Activated CD8-positive, alpha-beta T cell treated with anti-CD3 and anti-CD28 coated beads for 36 hours (primary cell): ENCODE measurements at regions of chr13 and their contacts with region 1.

Region 1: GRCh38 chr13:79405829-79406596 is at the start of gene RBM26:
- DNase-seq: peak; percentile 96
- ATAC-seq: peak; percentile 90
- H3K4me3 Mint-ChIP-seq: no peak within 1 kb of the TSS
- H3K27ac Mint-ChIP-seq: peak within 1 kb of the TSS; percentile 98
- H3K4me1 Mint-ChIP-seq: peaks cover 49% of the 10 kb centered on the region
- H3K27me3 Mint-ChIP-seq: no peaks in the 10 kb centered on the region
- CTCF ChIP-seq: no peak
- total RNA-seq, gene RBM26: 57.6 to 61.1 TPM

Region 2: GRCh38 chr13:79194272-79194671 is 211.7 kb before region 1 on chr13:
- CTCF ChIA-PET with region 1: no interaction called
- POLR2A ChIA-PET with region 1: interaction called, 3 read pairs
- intact Hi-C with region 1: loop called (anchors 10 kb)
- DNase-seq: peak; percentile 81
- ATAC-seq: peak; percentile 95
- H3K4me3 Mint-ChIP-seq: no peak overlapping the region
- H3K27ac Mint-ChIP-seq: peak overlapping the region; percentile 63
- H3K4me1 Mint-ChIP-seq: peaks cover 44% of the 10 kb centered on the region
- H3K27me3 Mint-ChIP-seq: no peaks in the 10 kb centered on the region
- CTCF ChIP-seq: no peak

Region 3: GRCh38 chr13:79393564-79394249 is 12.3 kb before region 1 on chr13:
- CTCF ChIA-PET with region 1: interaction called, 46 read pairs
- POLR2A ChIA-PET with region 1: interaction called, 39 read pairs
- intact Hi-C with region 1: no loop called
- DNase-seq: peak; percentile 53
- ATAC-seq: peak; percentile 32
- H3K4me3 Mint-ChIP-seq: peak overlapping the region; percentile 57
- H3K27ac Mint-ChIP-seq: peak overlapping the region; percentile 81
- H3K4me1 Mint-ChIP-seq: peaks cover 71% of the 10 kb centered on the region
- H3K27me3 Mint-ChIP-seq: no peaks in the 10 kb centered on the region
- CTCF ChIP-seq: no peak

Region 4: DNA sequence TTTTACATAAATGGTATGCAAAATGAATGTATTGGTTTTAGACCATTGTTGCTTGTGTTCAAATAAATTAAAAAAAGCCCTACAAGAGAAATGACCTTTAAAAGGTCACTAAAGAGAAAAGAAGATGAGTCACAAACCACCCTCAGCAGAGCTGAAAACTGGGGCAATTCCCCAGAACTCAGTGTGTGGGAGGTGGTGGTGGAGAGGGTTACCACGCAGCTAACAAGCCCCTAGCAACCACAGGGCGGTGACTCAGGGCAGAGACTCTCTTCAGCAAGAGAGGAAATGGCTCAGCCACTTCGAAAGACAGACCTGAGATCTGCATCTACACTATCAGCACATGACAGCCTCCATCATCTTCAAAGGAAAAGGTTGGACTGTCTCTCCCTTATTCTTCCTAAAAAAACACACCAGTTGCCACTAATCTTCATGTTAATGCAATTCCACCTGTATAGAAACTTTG is 45.5 kb after region 1 on chr13:
- CTCF ChIA-PET with region 1: no interaction called
- POLR2A ChIA-PET with region 1: interaction called, 3 read pairs
- intact Hi-C with region 1: loop called (anchors 2 kb)
- DNase-seq: peak; percentile 98
- ATAC-seq: peak; percentile 96
- H3K4me3 Mint-ChIP-seq: peak overlapping the region; percentile 69
- H3K27ac Mint-ChIP-seq: peak overlapping the region; percentile 94
- H3K4me1 Mint-ChIP-seq: peaks cover 66% of the 10 kb centered on the region
- H3K27me3 Mint-ChIP-seq: no peaks in the 10 kb centered on the region
- CTCF ChIP-seq: no peak